Activated T-helper 1 cell treated with anti-CD3 and anti-CD28 coated beads, Interleukin-12 subunit alpha, Interleukin-12 subunit beta, Interleukin-2, Interleukin-4 antibody, amounts not matched to agents 30 ng/mL and 10 ng/mL and 1 ng/mL, durations not matched to agents 14 hours and 24 hours and 36 hours (primary cell): ENCODE measurements at regions of chr12 and their contacts with region 1.

Region 1: DNA sequence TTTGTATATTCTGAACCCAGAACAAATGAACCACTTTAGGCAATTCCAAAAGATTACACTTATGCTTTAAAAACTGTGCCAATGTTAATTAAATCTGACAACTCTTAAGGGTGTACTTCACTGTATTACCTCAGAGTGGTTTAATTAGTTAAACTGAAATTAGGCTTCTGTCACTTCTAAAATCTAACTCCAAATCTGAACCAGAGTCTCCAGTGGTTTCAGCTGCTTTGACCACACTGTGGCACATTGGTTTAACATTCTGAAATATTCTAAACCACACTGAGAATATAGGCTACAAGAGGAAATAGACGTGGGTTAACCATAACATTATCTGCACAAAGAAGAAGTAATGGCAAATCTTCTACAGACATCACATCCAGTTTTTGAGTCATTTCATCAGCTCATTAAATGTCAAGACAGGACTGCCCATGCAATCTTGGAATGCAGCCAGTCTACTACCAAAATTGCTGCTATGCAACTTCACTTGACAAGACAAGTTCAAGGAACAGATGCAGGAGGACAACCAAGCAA is 94.8 kb downstream of the LRP6 start:
- DNase-seq: peak; percentile 12
- H3K4me3 Mint-ChIP-seq: no peak overlapping the region
- H3K27ac Mint-ChIP-seq: peak overlapping the region; percentile 42
- H3K4me1 Mint-ChIP-seq: peaks cover 15% of the 10 kb centered on the region
- H3K27me3 Mint-ChIP-seq: peaks cover 60% of the 10 kb centered on the region

Region 2: DNA sequence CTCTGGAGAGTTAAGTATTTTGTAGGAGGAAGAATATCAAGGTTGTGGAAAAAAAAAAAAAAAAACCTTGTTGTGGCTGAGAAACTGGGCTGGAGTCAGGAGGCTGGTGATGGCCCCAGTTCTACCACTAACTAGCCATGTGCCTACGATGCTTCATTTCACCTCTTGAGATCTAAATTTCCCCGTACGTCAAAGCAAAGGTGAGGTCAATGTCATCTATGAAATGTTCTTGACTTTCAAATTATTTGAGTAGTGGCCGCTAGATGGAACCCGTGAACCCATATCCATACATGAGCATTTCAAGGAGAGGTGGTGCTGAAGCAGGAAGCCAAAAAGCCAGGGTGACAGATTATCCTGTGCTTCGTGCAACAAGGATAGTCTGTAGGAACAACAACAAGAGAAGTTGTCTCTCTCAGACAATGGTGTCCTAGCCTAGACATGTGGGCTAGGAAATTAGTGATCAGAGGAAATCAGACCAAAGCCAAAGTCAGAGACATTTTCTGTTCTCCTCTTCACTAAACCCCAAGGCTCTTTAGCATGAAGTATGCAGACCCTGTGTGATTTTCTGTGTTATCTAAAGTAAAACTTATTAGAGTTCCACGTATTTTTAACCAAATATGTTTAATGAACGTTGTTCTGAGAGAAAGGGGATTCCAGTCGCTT is 618.1 kb before region 1 on chr12:
- intact Hi-C with region 1: loop called (anchors 1 kb)
- DNase-seq: peak; percentile 33
- H3K4me3 Mint-ChIP-seq: peak overlapping the region; percentile 45
- H3K27ac Mint-ChIP-seq: no peak overlapping the region
- H3K4me1 Mint-ChIP-seq: peaks cover 27% of the 10 kb centered on the region
- H3K27me3 Mint-ChIP-seq: peaks cover 8% of the 10 kb centered on the region

Region 3: DNA sequence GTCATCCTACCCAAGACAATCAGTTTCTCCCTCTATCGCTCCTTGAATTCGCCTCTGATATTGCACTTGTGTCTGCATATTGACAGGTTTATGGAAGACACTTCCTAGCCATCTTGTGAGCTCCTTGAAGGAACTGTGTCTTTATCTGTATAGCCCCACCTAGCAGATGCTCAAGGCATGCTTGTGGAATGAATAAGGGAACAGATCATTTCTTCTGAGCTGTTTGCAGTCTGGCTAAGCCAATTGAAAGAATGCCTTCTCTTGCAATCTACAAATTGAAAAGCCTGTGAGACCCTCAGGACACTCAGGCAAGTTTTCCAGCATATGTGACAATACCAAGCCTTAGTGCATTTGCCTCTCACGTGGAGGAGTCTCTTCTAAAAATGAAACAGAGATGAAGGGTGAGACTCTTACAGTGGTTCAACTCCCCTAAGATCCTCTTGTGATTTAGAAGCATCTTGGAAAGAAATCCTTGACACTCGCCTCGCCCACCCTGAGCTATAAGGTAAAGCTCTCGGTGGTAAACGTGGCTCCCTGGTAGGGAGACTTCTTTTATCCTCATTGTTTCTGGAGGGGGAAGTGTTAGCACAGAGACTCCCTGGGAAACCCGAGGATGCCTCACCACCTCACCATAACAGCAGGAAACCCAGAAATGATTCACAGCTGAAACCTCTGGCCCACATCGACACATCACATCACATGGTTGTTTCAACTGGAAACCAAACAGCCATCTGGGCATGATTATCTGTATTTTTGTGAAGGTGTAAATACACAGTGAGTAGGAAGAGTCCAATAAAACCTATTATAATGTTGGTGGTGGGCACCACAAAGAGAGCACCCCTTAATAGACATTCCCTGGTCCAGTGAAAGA is 213.6 kb before region 1 on chr12:
- intact Hi-C with region 1: loop called (anchors 10 kb)
- DNase-seq: peak; percentile 55
- H3K4me3 Mint-ChIP-seq: peak overlapping the region; percentile 29
- H3K27ac Mint-ChIP-seq: peak overlapping the region; percentile 89
- H3K4me1 Mint-ChIP-seq: peaks cover 76% of the 10 kb centered on the region
- H3K27me3 Mint-ChIP-seq: no peaks in the 10 kb centered on the region

Region 4: DNA sequence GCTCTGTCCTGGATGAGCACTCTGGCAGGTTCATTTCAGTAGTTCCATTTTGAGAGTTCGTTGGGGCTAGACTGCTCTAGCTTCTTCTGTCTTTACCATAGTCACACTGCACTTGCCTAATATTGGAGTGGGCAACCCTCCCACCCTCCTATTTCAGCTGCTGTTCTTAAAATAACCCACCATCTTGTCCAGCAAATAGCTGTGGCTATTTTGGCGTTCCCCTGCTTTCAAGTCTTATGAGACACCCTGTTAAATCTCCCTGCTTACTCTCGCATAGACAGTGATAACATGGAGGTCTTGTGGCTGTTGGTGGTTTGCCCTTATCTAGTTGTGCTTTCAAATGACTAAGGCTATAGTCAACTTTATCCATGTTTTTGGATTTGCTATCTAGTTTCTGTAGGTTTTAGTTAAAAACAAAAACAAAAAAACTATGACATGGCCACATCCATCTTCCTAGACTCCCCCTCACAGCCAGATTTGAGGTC is 29.3 kb after region 1 on chr12:
- intact Hi-C with region 1: loop called (anchors 1 kb)
- DNase-seq: no peak
- H3K4me3 Mint-ChIP-seq: no peak overlapping the region
- H3K27ac Mint-ChIP-seq: no peak overlapping the region
- H3K4me1 Mint-ChIP-seq: peaks cover 7% of the 10 kb centered on the region
- H3K27me3 Mint-ChIP-seq: peaks cover 22% of the 10 kb centered on the region

Region 5: GRCh38 chr12:12214201-12214600 is 42.1 kb after region 1 on chr12:
- intact Hi-C with region 1: no loop called
- DNase-seq: no peak
- H3K4me3 Mint-ChIP-seq: no peak overlapping the region
- H3K27ac Mint-ChIP-seq: no peak overlapping the region
- H3K4me1 Mint-ChIP-seq: peaks cover 6% of the 10 kb centered on the region
- H3K27me3 Mint-ChIP-seq: peaks cover 31% of the 10 kb centered on the region

Region 6: DNA sequence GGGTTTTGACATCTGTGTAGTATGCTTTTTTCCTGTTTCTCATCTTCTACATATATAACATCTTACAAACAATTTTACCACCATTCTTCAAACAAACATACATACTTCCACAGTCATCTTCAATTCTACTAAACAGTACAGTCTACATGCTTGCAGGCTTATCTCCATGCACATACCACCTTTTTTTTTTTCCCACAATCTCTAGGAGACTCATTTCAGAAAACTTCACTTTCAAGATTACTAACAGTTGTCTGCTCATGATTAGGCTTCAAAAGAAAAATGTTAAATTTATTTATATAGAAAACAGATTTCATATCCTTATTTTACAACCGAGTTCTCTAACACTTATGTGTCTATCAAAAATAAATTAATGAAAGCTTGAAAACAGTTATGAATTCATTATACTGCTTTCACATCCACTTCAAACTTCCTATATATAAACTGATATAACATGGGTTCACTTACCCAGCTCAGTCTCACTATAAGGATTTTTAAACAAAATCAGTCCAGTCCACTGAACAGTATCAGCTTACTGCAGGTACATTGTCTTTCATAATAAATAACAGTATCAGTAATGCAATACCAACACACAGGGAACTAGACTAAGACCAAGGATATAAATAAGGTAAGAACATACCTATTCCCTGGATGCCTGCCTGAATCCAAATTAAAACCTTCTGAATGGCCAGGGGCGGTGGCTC is 52.3 kb after region 1 on chr12:
- intact Hi-C with region 1: loop called (anchors 1 kb)
- DNase-seq: no peak
- H3K4me3 Mint-ChIP-seq: no peak overlapping the region
- H3K27ac Mint-ChIP-seq: no peak overlapping the region
- H3K4me1 Mint-ChIP-seq: peaks cover 6% of the 10 kb centered on the region
- H3K27me3 Mint-ChIP-seq: peaks cover 27% of the 10 kb centered on the region

Region 7: GRCh38 chr12:12266873-12267741 is 95.1 kb after region 1 on chr12 and contains the start of gene LRP6:
- intact Hi-C with region 1: loop called (anchors 5 kb)
- DNase-seq: peak; percentile 46
- H3K4me3 Mint-ChIP-seq: peak within 1 kb of the TSS; percentile 82
- H3K27ac Mint-ChIP-seq: peak within 1 kb of the TSS; percentile 44
- H3K4me1 Mint-ChIP-seq: peaks cover 14% of the 10 kb centered on the region
- H3K27me3 Mint-ChIP-seq: peaks cover 46% of the 10 kb centered on the region
- total RNA-seq, gene LRP6: 5.5 and 5.6 TPM in 2 replicates